ENCODE measurements at regions of chr1 and their contacts with region 1.

Region 1: DNA sequence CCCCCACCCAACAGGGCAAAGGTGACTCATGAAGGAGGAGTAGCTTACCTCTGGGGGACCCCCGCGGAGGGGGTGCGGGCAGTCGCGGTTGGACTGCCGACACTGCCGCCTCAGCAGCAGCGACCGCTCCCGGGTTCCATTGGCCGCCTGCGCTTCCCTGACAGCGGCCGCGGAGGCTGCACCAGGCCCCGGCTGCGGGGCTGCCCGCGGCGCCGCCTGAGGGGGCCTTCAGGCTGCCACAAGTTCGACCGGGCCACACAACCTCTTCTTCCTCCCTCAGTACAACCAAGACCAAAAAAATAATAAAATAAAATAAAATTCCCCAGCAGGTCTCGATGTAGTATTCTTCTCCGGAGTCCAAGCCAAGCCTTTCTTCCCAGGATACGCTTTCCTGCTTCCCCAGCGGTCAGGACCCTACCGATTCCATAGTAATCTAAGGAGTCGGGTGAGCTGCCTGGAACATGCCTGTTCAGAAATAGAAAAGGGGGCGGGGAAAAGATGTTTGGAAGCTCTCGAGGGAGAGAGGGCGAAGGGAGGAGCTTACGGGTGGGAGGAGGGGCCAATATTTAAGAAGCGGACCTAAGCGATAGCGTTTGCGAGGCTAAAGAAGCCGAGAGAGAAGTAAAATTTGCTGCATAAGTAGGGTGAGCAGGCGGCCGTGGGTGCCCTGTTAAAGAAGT is at the start of gene PI4KB:
- DNase-seq: peak; percentile 72 to 96 (median 93)
- ATAC-seq: peak; percentile 96
- H3K4me3 ChIP-seq: peak within 1 kb of the TSS; percentile 72
- H3K4me3 Mint-ChIP-seq: peak within 1 kb of the TSS; percentile 91 to 100 (median 96)
- H3K27ac ChIP-seq: peak within 1 kb of the TSS; percentile 96
- H3K27ac Mint-ChIP-seq: peak within 1 kb of the TSS; percentile 90 to 100 (median 97)
- H3K4me1 ChIP-seq: peaks cover 6 to 18% of the 10 kb centered on the region in 2 donors
- H3K4me1 Mint-ChIP-seq: peaks cover 14 to 53% (median 44%) of the 10 kb centered on the region in 7 donors
- H3K27me3 ChIP-seq: no peaks in the 10 kb centered on the region
- H3K27me3 Mint-ChIP-seq: peaks cover 0 to 2% (median 0%) of the 10 kb centered on the region in 5 donors
- total RNA-seq, gene PI4KB: 64.0 to 91.9 (median 76.3) TPM

Region 2: GRCh38 chr1:151165738-151166505 is 161.4 kb before region 1 on chr1 and contains the starts of genes LYSMD1 and SCNM1:
- CTCF ChIA-PET with region 1: interaction called, 3 read pairs
- POLR2A ChIA-PET with region 1: no interaction called
- intact Hi-C with region 1: loop called (anchors 1 to 5 kb)
- DNase-seq: peak; percentile 78 to 98 (median 97)
- ATAC-seq: peak; percentile 98
- H3K4me3 ChIP-seq: peak within 1 kb of the TSS; percentile 97
- H3K4me3 Mint-ChIP-seq: peak within 1 kb of the TSS; percentile 87 to 99 (median 95)
- H3K27ac ChIP-seq: peak within 1 kb of the TSS; percentile 71
- H3K27ac Mint-ChIP-seq: peak within 1 kb of the TSS; percentile 90 to 99 (median 97)
- H3K4me1 ChIP-seq: peaks cover 18 to 19% of the 10 kb centered on the region in 2 donors
- H3K4me1 Mint-ChIP-seq: peaks cover 30 to 70% (median 52%) of the 10 kb centered on the region in 7 donors
- H3K27me3 ChIP-seq: no peaks in the 10 kb centered on the region
- H3K27me3 Mint-ChIP-seq: peaks cover 0 to 3% (median 0%) of the 10 kb centered on the region in 5 donors
- total RNA-seq, gene LYSMD1: 1.4 to 3.3 (median 2.3) TPM
- total RNA-seq, gene SCNM1: 37.1 to 73.1 (median 57.1) TPM

Region 3: DNA sequence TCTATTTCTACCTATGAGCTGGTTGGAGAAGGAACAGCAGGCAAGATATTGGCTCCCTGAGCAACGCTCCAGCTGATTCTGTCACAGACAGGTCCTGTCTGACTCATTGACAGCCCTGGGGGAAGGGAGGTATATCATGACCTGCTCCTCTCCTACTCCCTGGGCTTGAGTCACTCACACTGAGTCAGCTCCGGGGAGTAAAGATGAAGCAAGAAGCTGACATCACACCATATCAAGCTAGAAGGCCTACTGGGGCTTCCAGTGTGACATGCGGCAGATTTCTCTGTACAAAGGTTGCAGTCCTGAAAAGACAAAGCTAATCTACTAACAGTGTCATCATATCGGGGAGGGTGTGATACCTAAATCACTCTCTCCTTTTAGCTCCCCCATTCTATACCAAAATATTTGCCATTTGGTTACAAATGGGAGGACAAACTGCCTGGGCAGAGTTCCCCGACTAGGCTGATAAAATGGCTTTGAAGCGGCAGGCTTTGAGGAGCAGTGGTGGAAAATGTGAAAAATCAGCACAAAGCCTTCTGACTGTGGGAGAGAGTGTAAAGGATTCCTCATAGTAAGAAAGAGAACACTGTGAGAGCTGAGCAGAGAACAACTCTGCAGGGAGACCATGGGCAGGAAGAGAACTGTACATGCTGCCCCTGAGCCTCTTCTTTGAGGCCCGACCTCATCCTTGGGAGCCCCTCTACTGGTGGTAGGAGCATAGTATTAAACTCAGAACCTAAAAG is 15.6 kb before region 1 on chr1:
- CTCF ChIA-PET with region 1: interaction called, 3 read pairs
- POLR2A ChIA-PET with region 1: interaction called, 4 read pairs
- intact Hi-C with region 1: loop called (anchors 1 to 2 kb)
- DNase-seq: peak in 1 of 9 donors; percentile 65
- ATAC-seq: peak; percentile 94
- H3K4me3 ChIP-seq: no peak overlapping the region
- H3K4me3 Mint-ChIP-seq: peak overlapping the region in 2 of 10 donors; percentile 7 to 12
- H3K27ac ChIP-seq: peak overlapping the region; percentile 4
- H3K27ac Mint-ChIP-seq: peak overlapping the region; percentile 21 to 88 (median 63)
- H3K4me1 ChIP-seq: peaks cover 4 to 10% of the 10 kb centered on the region in 2 donors
- H3K4me1 Mint-ChIP-seq: peaks cover 30 to 58% (median 48%) of the 10 kb centered on the region in 7 donors
- H3K27me3 ChIP-seq: no peaks in the 10 kb centered on the region
- H3K27me3 Mint-ChIP-seq: no peaks in the 10 kb centered on the region

Region 4: GRCh38 chr1:151340870-151341754 is 13.7 kb after region 1 on chr1:
- CTCF ChIA-PET with region 1: interaction called, 15 read pairs
- POLR2A ChIA-PET with region 1: interaction called, 54 read pairs
- intact Hi-C with region 1: loop called in 1 of 2 experiments (anchors 1 kb)
- DNase-seq: peak in 8 of 9 donors; percentile 46 to 75 (median 68)
- ATAC-seq: peak; percentile 92
- H3K4me3 ChIP-seq: no peak overlapping the region
- H3K4me3 Mint-ChIP-seq: peak overlapping the region in 1 of 10 donors; percentile 22
- H3K27ac ChIP-seq: peak overlapping the region; percentile 5
- H3K27ac Mint-ChIP-seq: peak overlapping the region; percentile 1 to 70 (median 52)
- H3K4me1 ChIP-seq: peaks cover 6 to 7% of the 10 kb centered on the region in 2 donors
- H3K4me1 Mint-ChIP-seq: peaks cover 20 to 39% (median 28%) of the 10 kb centered on the region in 7 donors
- H3K27me3 ChIP-seq: no peaks in the 10 kb centered on the region
- H3K27me3 Mint-ChIP-seq: no peaks in the 10 kb centered on the region

Region 5: DNA sequence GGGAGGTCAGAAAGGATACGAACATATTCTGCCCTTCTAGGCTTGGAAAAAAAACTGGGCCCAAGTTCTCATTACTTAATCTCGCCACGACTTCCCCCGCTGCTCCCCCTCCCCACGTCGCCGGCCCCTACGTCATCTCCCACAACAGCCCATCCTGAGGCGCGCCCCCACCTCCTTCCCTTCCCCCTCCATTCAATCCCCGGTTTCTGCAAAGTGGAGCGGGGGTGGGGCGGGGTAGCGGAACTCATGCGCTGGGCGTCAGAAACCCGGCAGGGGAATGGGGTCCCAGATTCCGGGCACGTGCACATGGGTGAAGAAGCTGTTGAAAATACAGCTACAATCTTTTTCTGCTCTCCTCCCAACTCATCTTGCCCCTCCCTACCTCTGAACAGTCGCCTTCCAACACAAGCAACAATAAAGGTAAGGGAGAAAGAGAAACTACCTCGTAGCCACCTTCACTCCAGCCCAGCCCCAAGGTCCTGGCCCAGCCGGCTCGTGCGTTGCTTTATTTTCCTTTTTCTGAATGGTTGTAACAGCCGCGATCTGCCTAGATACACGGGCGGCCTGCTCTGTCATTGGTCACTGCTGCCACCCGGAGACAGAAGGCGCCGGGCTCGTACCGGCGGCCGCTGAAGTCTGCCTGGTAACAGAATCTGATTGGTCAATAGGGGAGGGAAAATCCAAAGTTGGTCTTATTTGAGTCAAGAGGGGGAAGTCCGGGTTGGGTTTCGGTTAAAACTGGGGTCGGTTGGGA is 19.6 kb after region 1 on chr1 and contains the start of gene RFX5:
- CTCF ChIA-PET with region 1: no interaction called
- POLR2A ChIA-PET with region 1: interaction called, 54 read pairs
- intact Hi-C with region 1: loop called (anchors 1 kb)
- DNase-seq: peak; percentile 73 to 98 (median 94)
- ATAC-seq: peak; percentile 95
- H3K4me3 ChIP-seq: peak within 1 kb of the TSS; percentile 75
- H3K4me3 Mint-ChIP-seq: peak within 1 kb of the TSS; percentile 85 to 98 (median 95)
- H3K27ac ChIP-seq: peak within 1 kb of the TSS; percentile 96
- H3K27ac Mint-ChIP-seq: peak within 1 kb of the TSS; percentile 95 to 100 (median 99)
- H3K4me1 ChIP-seq: peaks cover 13 to 16% of the 10 kb centered on the region in 2 donors
- H3K4me1 Mint-ChIP-seq: peaks cover 20 to 44% (median 39%) of the 10 kb centered on the region in 7 donors
- H3K27me3 ChIP-seq: no peaks in the 10 kb centered on the region
- H3K27me3 Mint-ChIP-seq: no peaks in the 10 kb centered on the region
- total RNA-seq, gene RFX5: 62.6 to 89.3 (median 82.2) TPM

Region 6: DNA sequence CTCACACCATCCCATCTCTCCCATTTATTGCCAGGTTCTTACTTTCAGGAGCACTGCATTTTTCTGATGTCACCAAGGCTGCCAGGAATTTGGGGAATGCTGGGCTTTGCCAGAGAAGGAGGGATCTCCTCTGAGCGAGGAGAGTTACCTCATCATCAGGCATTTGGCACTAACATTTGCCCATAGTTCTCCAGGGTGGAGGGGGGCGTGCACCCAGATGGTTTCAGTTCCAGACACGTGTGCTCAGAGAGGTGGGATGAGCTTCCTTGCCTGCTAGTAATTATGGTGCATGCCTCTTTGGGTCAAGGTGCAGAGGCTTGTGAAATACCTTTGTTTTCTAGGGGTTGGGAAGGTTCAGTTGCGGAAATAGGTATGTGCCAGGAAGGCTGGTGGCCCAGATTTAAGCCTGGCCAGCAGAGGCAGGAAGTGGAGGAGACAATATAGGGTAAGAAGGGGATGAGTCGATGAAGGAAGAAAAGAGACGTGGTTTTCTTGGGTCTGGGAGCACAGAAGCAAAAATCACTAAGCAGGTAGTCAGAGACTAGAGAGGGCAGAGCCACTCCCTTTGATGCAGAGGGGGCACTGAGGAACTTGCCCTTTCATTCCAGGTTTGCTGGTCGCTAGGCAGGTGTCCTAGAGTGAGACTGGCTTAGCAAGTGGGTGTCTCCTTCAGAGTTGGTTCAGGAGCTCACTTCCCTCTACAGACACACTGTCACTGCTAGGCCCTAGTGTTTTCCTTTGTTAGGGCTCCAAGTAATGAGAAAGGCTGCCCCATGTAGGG is 219.9 kb after region 1 on chr1:
- CTCF ChIA-PET with region 1: no interaction called
- POLR2A ChIA-PET with region 1: no interaction called
- intact Hi-C with region 1: no loop called
- DNase-seq: no peak
- ATAC-seq: no peak
- H3K4me3 ChIP-seq: no peak overlapping the region
- H3K4me3 Mint-ChIP-seq: peak overlapping the region in 2 of 10 donors; percentile 3 to 64
- H3K27ac ChIP-seq: no peak overlapping the region
- H3K27ac Mint-ChIP-seq: peak overlapping the region in 1 of 9 donors; percentile 8
- H3K4me1 ChIP-seq: no peaks in the 10 kb centered on the region
- H3K4me1 Mint-ChIP-seq: peaks cover 0 to 11% (median 6%) of the 10 kb centered on the region in 7 donors
- H3K27me3 ChIP-seq: no peaks in the 10 kb centered on the region
- H3K27me3 Mint-ChIP-seq: peaks cover 0 to 7% (median 0%) of the 10 kb centered on the region in 5 donors

Region 7: GRCh38 chr1:151762941-151763921 is 435.9 kb after region 1 on chr1 and contains the start of gene MRPL9:
- CTCF ChIA-PET with region 1: no interaction called
- POLR2A ChIA-PET with region 1: interaction called, 3 read pairs
- intact Hi-C with region 1: loop called in 1 of 2 experiments (anchors 1 kb)
- DNase-seq: peak; percentile 73 to 85 (median 82)
- ATAC-seq: peak; percentile 99
- H3K4me3 ChIP-seq: peak within 1 kb of the TSS; percentile 76
- H3K4me3 Mint-ChIP-seq: peak within 1 kb of the TSS; percentile 91 to 98 (median 95)
- H3K27ac ChIP-seq: peak within 1 kb of the TSS; percentile 81
- H3K27ac Mint-ChIP-seq: peak within 1 kb of the TSS; percentile 92 to 100 (median 97)
- H3K4me1 ChIP-seq: peaks cover 11 to 12% of the 10 kb centered on the region in 2 donors
- H3K4me1 Mint-ChIP-seq: peaks cover 13 to 28% (median 21%) of the 10 kb centered on the region in 7 donors
- H3K27me3 ChIP-seq: no peaks in the 10 kb centered on the region
- H3K27me3 Mint-ChIP-seq: no peaks in the 10 kb centered on the region
- total RNA-seq, gene MRPL9: 77.0 to 133 (median 81.5) TPM

Measured in naive thymus-derived CD4-positive, alpha-beta T cell (primary cell).